ENCODE measurements at regions of chr4 and their contacts with region 1.

Region 1: DNA sequence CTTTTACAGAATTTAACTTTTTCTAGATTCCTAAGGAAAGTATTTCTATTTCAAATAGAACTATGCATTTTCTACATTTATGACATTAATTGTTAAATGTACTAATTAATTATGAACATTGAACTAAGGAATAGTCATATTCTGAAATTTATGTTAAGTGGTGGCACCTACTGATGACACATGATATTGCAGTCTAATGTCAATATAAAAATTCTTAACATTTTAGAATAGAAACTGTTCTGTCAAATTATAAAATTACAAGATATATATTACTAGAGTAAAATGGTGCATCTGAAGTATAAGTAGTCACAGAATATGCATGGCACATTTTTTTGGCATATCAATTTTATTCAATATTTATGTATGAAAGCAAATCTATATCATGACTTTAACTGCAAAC is 40.2 kb upstream of the NDNF start:
- DNase-seq: no peak
- H3K4me3 ChIP-seq: no peak overlapping the region
- H3K4me3 Mint-ChIP-seq: no peak overlapping the region
- H3K27ac ChIP-seq: no peak overlapping the region
- H3K27ac Mint-ChIP-seq: no peak overlapping the region
- H3K4me1 ChIP-seq: no peaks in the 10 kb centered on the region
- H3K4me1 Mint-ChIP-seq: peaks cover 0 to 5% (median 2%) of the 10 kb centered on the region in 4 donors
- H3K27me3 ChIP-seq: no peaks in the 10 kb centered on the region
- H3K27me3 Mint-ChIP-seq: peaks cover 0 to 2% of the 10 kb centered on the region in 2 donors

Region 2: GRCh38 chr4:121243485-121243884 is 131.0 kb after region 1 on chr4:
- CTCF ChIA-PET with region 1: no interaction called
- POLR2A ChIA-PET with region 1: no interaction called
- intact Hi-C with region 1: loop called (anchors 10 kb)
- DNase-seq: peak in 2 of 5 donors; percentile 12 to 21
- H3K4me3 ChIP-seq: peak overlapping the region; percentile 38 to 52
- H3K4me3 Mint-ChIP-seq: peak overlapping the region; percentile 78 to 94 (median 87)
- H3K27ac ChIP-seq: no peak overlapping the region
- H3K27ac Mint-ChIP-seq: peak overlapping the region in 5 of 7 donors; percentile 13 to 79 (median 33)
- H3K4me1 ChIP-seq: peaks cover 5% of the 10 kb centered on the region
- H3K4me1 Mint-ChIP-seq: peaks cover 6 to 18% (median 16%) of the 10 kb centered on the region in 4 donors
- H3K27me3 ChIP-seq: no peaks in the 10 kb centered on the region
- H3K27me3 Mint-ChIP-seq: no peaks in the 10 kb centered on the region

Region 3: GRCh38 chr4:121307445-121308327 is 195.2 kb after region 1 on chr4:
- CTCF ChIA-PET with region 1: interaction called, 3 read pairs
- POLR2A ChIA-PET with region 1: no interaction called
- intact Hi-C with region 1: loop called (anchors 5 kb)
- DNase-seq: peak; percentile 44 to 53 (median 45)
- H3K4me3 ChIP-seq: no peak overlapping the region
- H3K4me3 Mint-ChIP-seq: peak overlapping the region in 1 of 8 donors; percentile 17
- H3K27ac ChIP-seq: no peak overlapping the region
- H3K27ac Mint-ChIP-seq: peak overlapping the region in 2 of 7 donors; percentile 29 to 73
- H3K4me1 ChIP-seq: peaks cover 6% of the 10 kb centered on the region
- H3K4me1 Mint-ChIP-seq: peaks cover 9 to 15% (median 13%) of the 10 kb centered on the region in 4 donors
- H3K27me3 ChIP-seq: no peaks in the 10 kb centered on the region
- H3K27me3 Mint-ChIP-seq: peaks cover 0 to 3% of the 10 kb centered on the region in 2 donors

Region 4: DNA sequence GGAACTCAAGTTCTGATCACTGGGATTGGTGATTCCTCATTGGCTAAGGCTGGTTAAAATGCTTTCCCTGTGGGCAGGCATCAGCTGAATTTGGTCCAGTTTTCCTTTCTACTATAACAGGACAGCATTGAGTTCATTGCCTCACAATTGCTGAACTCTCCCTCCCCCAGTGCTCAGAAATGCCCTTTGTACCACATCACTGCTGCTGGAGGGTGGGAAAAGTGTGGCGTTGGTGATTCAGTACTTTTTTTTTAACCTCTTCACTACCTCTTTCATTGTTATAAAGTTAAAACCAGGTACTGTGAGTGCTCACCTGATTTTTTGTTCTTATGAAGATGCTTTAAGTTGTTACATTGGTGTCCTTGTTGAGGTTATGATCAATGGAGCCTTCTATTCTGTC is 1413.3 kb after region 1 on chr4:
- CTCF ChIA-PET with region 1: no interaction called
- POLR2A ChIA-PET with region 1: no interaction called
- intact Hi-C with region 1: no loop called
- DNase-seq: no peak
- H3K4me3 ChIP-seq: no peak overlapping the region
- H3K4me3 Mint-ChIP-seq: no peak overlapping the region
- H3K27ac ChIP-seq: no peak overlapping the region
- H3K27ac Mint-ChIP-seq: no peak overlapping the region
- H3K4me1 ChIP-seq: no peaks in the 10 kb centered on the region
- H3K4me1 Mint-ChIP-seq: peaks cover 0 to 4% (median under 1%) of the 10 kb centered on the region in 4 donors
- H3K27me3 ChIP-seq: no peaks in the 10 kb centered on the region
- H3K27me3 Mint-ChIP-seq: peaks cover 0 to 5% of the 10 kb centered on the region in 2 donors

Measured in CD4-positive, alpha-beta memory T cell (primary cell).